ENCODE measurements at regions of chr4 and their contacts with region 1.

Region 1: GRCh38 chr4:153362184-153362583 is 17.7 kb downstream of the MND1 start:
- DNase-seq: no peak
- ATAC-seq: no peak
- H3K4me3 ChIP-seq: no peak overlapping the region
- H3K4me3 Mint-ChIP-seq: no peak overlapping the region
- H3K27ac ChIP-seq: no peak overlapping the region
- H3K27ac Mint-ChIP-seq: no peak overlapping the region
- H3K4me1 ChIP-seq: no peaks in the 10 kb centered on the region
- H3K4me1 Mint-ChIP-seq: peaks cover 5% of the 10 kb centered on the region
- H3K27me3 ChIP-seq: no peaks in the 10 kb centered on the region
- H3K27me3 Mint-ChIP-seq: no peaks in the 10 kb centered on the region
- CTCF ChIP-seq: no peak

Region 2: GRCh38 chr4:153294631-153295030 is 67.6 kb before region 1 on chr4:
- CTCF ChIA-PET with region 1: no interaction called
- POLR2A ChIA-PET with region 1: no interaction called
- intact Hi-C with region 1: loop called in 1 of 2 experiments (anchors 2 kb)
- DNase-seq: no peak
- ATAC-seq: no peak
- H3K4me3 ChIP-seq: no peak overlapping the region
- H3K4me3 Mint-ChIP-seq: no peak overlapping the region
- H3K27ac ChIP-seq: no peak overlapping the region
- H3K27ac Mint-ChIP-seq: no peak overlapping the region
- H3K4me1 ChIP-seq: no peaks in the 10 kb centered on the region
- H3K4me1 Mint-ChIP-seq: no peaks in the 10 kb centered on the region
- H3K27me3 ChIP-seq: no peaks in the 10 kb centered on the region
- H3K27me3 Mint-ChIP-seq: no peaks in the 10 kb centered on the region
- CTCF ChIP-seq: no peak

Region 3: DNA sequence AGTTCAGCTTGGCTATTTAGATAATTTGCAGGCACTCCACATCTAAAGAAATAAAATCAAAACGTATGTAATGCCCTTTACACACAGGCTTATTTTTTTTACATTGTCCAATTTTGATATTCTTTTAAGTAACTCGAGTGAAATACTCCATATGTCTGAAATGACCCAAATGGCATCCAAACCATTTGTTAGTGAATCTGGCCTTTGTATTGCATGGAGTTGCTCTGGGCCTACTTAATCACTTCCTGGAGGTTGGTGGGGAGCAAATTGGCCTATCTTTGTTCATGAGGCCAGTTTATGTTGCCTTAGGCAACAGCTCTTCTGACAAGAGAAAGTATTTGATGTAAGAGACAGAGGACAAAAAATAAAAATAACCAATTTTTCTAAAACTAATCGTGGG is 56.4 kb after region 1 on chr4:
- CTCF ChIA-PET with region 1: no interaction called
- POLR2A ChIA-PET with region 1: no interaction called
- intact Hi-C with region 1: loop called in 1 of 2 experiments (anchors 5 kb)
- DNase-seq: no peak
- ATAC-seq: no peak
- H3K4me3 ChIP-seq: no peak overlapping the region
- H3K4me3 Mint-ChIP-seq: no peak overlapping the region
- H3K27ac ChIP-seq: no peak overlapping the region
- H3K27ac Mint-ChIP-seq: no peak overlapping the region
- H3K4me1 ChIP-seq: peaks cover 7% of the 10 kb centered on the region
- H3K4me1 Mint-ChIP-seq: peaks cover 10% of the 10 kb centered on the region
- H3K27me3 ChIP-seq: no peaks in the 10 kb centered on the region
- H3K27me3 Mint-ChIP-seq: no peaks in the 10 kb centered on the region
- CTCF ChIP-seq: no peak

Measured in CD4-positive, alpha-beta T cell (primary cell).